ENCODE measurements at regions of chr6 and their contacts with region 1.

Region 1: DNA sequence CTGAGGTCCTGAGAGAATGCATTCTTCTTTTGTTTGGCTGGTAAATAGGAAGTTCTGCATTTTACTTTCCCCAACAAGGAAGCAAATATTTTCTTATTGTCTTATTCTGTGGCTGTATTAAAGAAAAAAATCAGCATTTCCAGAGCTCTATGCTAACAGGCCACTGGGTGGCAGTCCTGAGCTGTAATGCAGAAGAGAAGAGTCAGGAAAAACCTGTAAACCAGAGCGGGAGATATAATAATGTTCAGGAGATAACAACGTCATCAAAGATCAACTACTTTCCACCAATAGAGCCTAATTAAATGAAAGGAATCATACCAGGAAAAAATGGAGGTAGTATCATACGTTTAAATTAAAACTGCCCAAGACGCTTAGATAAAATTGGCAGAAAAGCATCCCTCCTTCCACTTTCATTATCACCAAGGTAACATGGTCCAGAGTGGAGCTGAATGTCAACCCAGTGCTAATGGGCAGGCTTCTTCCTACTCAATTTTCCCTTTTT is 55.6 kb upstream of the CARMIL1 start:
- DNase-seq: peak; percentile 70
- ATAC-seq: peak in 1 of 2 donors; percentile 67

Region 2: DNA sequence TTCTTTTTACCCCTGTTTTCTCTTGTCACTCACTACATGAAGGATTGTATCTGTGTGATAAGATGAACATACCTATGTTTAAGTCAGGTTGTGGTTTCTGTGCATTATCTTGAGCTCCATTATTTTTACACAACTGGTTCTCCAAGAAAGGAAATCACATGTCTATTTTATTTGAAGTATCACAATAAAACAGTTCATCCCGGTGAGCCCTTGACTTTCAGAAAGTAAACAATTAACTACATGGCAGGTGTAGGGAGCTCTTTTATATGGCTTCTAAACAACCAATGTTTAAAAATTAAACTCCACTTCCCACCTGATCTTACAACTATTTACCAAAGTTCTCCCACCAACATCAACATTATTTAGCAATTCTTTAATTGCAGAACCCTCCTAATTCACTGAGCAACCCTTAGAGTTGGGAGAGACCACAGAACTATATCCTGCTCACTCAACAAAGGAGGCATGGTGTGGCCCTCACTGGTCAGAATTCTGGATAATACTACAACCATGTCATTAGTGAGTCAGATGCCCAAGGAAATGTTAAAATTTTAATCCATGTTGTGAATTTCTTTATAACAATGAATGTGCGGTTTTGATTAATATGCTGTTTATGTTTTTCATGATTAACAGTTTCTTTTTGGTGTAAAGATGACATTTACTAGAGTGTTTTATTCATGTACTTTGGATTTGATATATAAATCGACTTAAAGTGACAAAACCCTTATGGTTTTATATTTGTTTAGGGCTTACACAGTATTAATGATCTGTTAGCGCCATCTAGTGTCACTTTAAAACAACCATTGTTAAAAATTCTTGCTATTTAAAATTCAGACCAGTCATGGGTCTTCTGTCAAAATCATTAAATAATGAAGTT is 378.5 kb after region 1 on chr6:
- intact Hi-C with region 1: loop called in 1 of 2 experiments (anchors 2 kb)
- DNase-seq: no peak
- ATAC-seq: peak in 1 of 2 donors; percentile 47

Region 3: DNA sequence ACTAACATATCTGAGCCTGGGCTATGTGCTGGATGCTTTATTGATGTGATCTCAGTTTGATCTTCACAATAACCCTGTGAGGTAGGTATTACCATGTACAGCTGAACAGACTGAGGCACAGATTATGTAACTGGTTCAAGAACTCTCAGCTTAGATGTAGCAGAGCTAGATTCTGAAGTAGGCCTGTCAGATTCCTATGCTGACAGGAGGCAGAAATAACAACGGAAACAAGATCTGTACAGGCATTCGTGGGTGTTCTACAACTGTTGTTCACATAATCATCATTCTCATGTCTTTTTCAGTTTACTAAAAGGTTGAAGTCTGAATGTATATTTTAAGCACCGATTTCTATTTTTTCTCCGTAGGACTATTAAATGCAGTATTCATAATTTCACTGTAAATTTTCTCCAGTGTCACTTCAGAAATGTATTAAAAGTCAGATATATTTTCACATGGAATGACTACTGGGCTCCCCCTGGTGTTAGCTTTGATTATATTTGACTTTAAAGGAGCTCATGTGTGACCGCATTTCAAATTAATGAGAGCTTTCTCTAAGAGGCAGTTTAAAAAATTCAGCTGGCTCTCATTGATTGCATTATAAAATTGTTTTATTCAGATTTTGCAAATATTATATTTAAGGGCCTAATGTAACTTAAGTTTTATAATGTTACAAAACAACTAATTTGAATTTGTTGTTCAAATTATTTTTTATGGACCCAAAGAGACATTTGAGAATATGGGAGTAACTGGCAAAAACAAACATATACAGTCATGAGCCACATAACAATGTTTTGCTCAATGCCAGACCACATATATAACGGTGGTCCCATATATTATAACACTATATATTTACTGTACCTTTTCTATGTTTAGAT is 494.6 kb after region 1 on chr6:
- intact Hi-C with region 1: loop called (anchors 5 to 10 kb)
- DNase-seq: no peak
- ATAC-seq: no peak

Measured in left cardiac atrium (tissue), 4 donors.